CD8-positive, alpha-beta T cell (primary cell): ENCODE measurements at regions of chr21 and their contacts with region 1.

Region 1: DNA sequence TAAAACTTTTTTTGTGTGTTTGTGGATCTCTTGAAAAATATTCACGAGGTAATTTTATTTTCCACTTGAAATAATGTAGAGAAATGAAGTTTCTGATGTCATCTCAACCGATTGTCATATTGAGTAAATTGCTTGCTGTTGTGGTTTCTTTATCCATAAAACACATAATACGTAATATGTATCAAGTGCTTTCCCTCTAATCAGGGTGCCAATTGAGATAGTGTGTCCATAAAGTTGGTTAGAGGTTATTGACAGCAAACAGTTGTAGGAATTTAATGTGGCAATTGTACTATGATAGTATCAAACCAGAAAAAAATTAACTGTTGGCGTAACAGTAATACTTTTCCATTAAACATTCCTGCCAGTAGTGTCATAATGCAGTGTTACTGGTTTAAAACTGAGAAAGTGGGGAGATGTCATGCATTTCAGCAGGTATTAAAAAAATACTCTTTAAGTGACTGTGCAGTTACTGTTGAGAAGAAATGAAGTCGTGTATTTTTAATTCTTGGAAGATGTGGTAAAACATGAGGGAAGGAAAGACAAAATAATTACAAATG is 38.3 kb downstream of the USP25 start:
- DNase-seq: no peak
- ATAC-seq: no peak
- H3K4me3 ChIP-seq: no peak overlapping the region
- H3K4me3 Mint-ChIP-seq: no peak overlapping the region
- H3K27ac ChIP-seq: no peak overlapping the region
- H3K27ac Mint-ChIP-seq: no peak overlapping the region
- H3K4me1 ChIP-seq: no peaks in the 10 kb centered on the region
- H3K4me1 Mint-ChIP-seq: peaks cover 76% of the 10 kb centered on the region
- H3K27me3 ChIP-seq: no peaks in the 10 kb centered on the region
- H3K27me3 Mint-ChIP-seq: no peaks in the 10 kb centered on the region
- CTCF ChIP-seq: no peak

Region 2: GRCh38 chr21:14273736-14274538 is 1494.2 kb before region 1 on chr21:
- CTCF ChIA-PET with region 1: no interaction called
- POLR2A ChIA-PET with region 1: no interaction called
- intact Hi-C with region 1: loop called in 1 of 2 experiments (anchors 2 kb)
- DNase-seq: no peak
- ATAC-seq: no peak
- H3K4me3 ChIP-seq: no peak overlapping the region
- H3K4me3 Mint-ChIP-seq: no peak overlapping the region
- H3K27ac ChIP-seq: no peak overlapping the region
- H3K27ac Mint-ChIP-seq: no peak overlapping the region
- H3K4me1 ChIP-seq: no peaks in the 10 kb centered on the region
- H3K4me1 Mint-ChIP-seq: no peaks in the 10 kb centered on the region
- H3K27me3 ChIP-seq: no peaks in the 10 kb centered on the region
- H3K27me3 Mint-ChIP-seq: peaks cover 25% of the 10 kb centered on the region
- CTCF ChIP-seq: no peak

Region 3: DNA sequence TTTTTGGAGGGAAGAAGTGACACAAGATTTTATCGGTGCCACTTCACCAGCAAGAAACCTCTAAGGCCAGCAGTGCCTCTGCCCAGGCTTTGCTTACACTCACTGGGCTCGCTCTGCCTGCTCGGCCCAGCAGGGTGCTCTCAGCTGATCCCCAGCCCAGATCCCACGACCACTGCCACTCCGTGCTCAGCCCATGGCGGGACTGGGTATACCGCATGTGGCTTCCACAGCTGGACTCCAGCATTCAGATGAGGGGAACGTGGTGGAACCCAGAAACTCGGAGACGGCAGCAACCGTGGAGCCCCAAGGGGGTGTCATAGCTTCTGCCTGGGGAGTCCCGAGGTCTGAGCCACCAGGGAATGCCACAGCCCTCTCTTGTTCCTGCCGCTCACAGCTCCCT is 25.4 kb before region 1 on chr21:
- CTCF ChIA-PET with region 1: no interaction called
- POLR2A ChIA-PET with region 1: no interaction called
- intact Hi-C with region 1: no loop called
- DNase-seq: no peak
- ATAC-seq: no peak
- H3K4me3 ChIP-seq: no peak overlapping the region
- H3K4me3 Mint-ChIP-seq: no peak overlapping the region
- H3K27ac ChIP-seq: no peak overlapping the region
- H3K27ac Mint-ChIP-seq: no peak overlapping the region
- H3K4me1 ChIP-seq: peaks cover 28% of the 10 kb centered on the region
- H3K4me1 Mint-ChIP-seq: peaks cover 79% of the 10 kb centered on the region
- H3K27me3 ChIP-seq: no peaks in the 10 kb centered on the region
- H3K27me3 Mint-ChIP-seq: no peaks in the 10 kb centered on the region
- CTCF ChIP-seq: no peak

Region 4: DNA sequence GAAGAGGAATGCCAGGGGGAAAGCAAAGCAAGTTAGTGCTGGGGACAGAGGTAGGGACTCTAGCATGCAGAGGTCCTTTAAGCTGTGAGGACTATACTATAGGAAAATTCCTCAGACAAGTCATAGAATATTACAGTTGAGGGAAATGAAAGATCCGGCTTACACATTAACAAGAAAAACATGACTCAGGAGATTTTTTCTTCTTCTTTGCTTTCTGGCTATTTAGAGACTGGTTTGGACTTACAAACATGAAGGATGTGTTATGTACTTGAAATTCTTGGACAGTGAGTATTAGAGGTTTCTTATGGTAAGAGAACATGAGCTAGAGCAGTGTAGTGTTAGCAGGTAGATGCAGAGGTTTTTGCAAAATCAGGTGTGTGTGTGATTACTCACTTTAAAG is 13.5 kb before region 1 on chr21:
- CTCF ChIA-PET with region 1: interaction called, 3 read pairs
- POLR2A ChIA-PET with region 1: no interaction called
- intact Hi-C with region 1: loop called in 1 of 2 experiments (anchors 1 kb)
- DNase-seq: no peak
- ATAC-seq: no peak
- H3K4me3 ChIP-seq: no peak overlapping the region
- H3K4me3 Mint-ChIP-seq: no peak overlapping the region
- H3K27ac ChIP-seq: no peak overlapping the region
- H3K27ac Mint-ChIP-seq: no peak overlapping the region
- H3K4me1 ChIP-seq: peaks cover 55% of the 10 kb centered on the region
- H3K4me1 Mint-ChIP-seq: peaks cover 86% of the 10 kb centered on the region
- H3K27me3 ChIP-seq: no peaks in the 10 kb centered on the region
- H3K27me3 Mint-ChIP-seq: no peaks in the 10 kb centered on the region
- CTCF ChIP-seq: no peak

Region 5: DNA sequence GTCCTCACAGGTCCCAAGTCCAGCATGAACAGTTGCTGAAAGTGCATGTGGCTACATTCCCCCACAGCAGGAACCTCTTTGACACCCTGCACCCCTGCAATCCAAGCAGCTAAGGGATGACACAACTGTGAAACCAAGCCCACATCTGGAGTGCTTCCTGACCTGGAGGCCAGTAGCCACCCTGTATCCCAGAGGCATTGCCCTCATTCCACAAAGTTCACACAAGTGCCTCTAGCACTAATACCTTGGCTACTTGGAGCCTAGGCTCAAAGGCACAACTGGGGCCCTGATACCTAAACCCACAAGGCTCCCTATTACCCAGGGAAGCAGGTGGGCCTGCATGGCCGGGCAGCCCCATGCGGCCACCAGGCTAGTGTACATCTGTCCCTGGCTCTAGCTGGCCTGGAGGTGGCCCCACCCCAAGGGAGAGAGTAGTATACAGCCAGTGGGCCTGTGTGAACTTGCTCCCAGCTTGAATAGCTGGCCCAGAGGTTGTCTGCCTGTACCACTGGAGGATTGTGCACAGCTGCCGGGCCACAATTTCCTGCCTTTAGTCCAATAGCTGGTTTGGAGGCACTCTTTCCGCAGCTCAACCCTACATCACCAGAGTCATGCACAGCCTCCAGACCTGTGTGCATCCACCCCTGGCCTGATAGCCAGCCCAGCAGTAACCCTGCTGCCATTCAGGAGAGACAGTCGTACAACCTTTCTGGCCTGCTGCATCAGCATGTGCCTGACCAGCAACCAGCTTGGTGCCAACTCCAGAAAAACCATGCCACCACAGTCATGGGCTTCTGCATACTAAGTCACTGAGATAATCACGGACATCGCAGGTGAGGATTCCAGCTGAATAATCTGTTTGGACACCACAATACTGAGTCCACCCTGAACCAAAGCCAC is 13.9 kb after region 1 on chr21:
- CTCF ChIA-PET with region 1: interaction called, 3 read pairs
- POLR2A ChIA-PET with region 1: no interaction called
- intact Hi-C with region 1: loop called in 1 of 2 experiments (anchors 2 kb)
- DNase-seq: no peak
- ATAC-seq: no peak
- H3K4me3 ChIP-seq: no peak overlapping the region
- H3K4me3 Mint-ChIP-seq: no peak overlapping the region
- H3K27ac ChIP-seq: no peak overlapping the region
- H3K27ac Mint-ChIP-seq: no peak overlapping the region
- H3K4me1 ChIP-seq: no peaks in the 10 kb centered on the region
- H3K4me1 Mint-ChIP-seq: peaks cover 35% of the 10 kb centered on the region
- H3K27me3 ChIP-seq: no peaks in the 10 kb centered on the region
- H3K27me3 Mint-ChIP-seq: no peaks in the 10 kb centered on the region
- CTCF ChIP-seq: no peak